ENCODE measurements at regions of chr11 and their contacts with region 1.

Region 1: DNA sequence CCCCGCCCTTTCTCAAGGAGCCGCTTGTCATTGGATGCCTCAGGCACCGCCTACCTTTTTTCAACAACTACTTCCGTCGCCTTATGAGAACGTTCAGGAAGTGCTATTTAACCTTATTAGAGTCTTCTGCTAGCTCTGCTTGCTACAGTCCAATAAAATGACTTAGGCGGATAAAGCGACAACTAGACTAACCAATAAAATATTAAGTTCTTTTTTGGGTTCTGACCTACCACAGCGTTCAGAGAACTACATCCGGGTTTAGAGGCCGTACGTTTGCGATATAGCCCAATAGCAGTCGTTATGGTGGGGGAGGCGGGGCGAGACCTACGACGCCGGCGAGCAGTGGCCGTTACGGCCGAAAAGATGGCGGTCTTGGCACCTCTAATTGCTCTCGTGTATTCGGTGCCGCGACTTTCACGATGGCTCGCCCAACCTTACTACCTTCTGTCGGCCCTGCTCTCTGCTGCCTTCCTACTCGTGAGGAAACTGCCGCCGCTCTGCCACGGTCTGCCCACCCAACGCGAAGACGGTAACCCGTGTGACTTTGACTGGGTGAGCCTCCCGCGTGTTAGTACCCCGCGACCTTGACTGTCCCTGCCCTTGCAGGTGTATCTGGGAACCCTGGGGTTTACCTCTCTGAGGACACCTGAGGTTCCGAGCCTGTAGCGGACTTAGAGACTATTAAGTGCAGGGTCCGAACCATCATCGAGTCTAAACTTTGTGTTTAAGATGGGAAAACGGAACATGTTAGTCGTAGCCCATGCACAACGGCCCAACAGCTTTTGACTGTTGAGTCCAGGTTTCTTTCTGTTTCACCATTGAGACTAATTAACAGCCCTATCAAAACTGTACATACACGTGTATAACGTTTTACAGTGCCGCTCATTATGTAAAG is at the start of gene TMX2:
- DNase-seq: peak; percentile 96
- ATAC-seq: peak; percentile 86
- H3K4me3 ChIP-seq: peak within 1 kb of the TSS; percentile 78 to 100 (median 93)
- H3K4me3 Mint-ChIP-seq: peak within 1 kb of the TSS; percentile 99
- H3K27ac ChIP-seq: peak within 1 kb of the TSS; percentile 70 to 96
- H3K27ac Mint-ChIP-seq: peak within 1 kb of the TSS; percentile 94
- H3K4me1 ChIP-seq: peaks cover 21 to 28% of the 10 kb centered on the region in 2 donors
- H3K4me1 Mint-ChIP-seq: peaks cover 42% of the 10 kb centered on the region
- H3K27me3 ChIP-seq: no peaks in the 10 kb centered on the region
- H3K27me3 Mint-ChIP-seq: no peaks in the 10 kb centered on the region
- CTCF ChIP-seq: no peak
- total RNA-seq, gene TMX2: 58.8 and 60.2 TPM in 2 replicates

Region 2: GRCh38 chr11:57657194-57658022 is 55.1 kb before region 1 on chr11 and contains the start of gene CLP1:
- CTCF ChIA-PET with region 1: no interaction called
- POLR2A ChIA-PET with region 1: no interaction called
- intact Hi-C with region 1: loop called (anchors 1 kb)
- DNase-seq: peak; percentile 98
- ATAC-seq: peak; percentile 97
- H3K4me3 ChIP-seq: peak within 1 kb of the TSS; percentile 68 to 95 (median 92)
- H3K4me3 Mint-ChIP-seq: peak within 1 kb of the TSS; percentile 94
- H3K27ac ChIP-seq: peak within 1 kb of the TSS; percentile 77 to 92
- H3K27ac Mint-ChIP-seq: peak within 1 kb of the TSS; percentile 94
- H3K4me1 ChIP-seq: peaks cover 8 to 14% of the 10 kb centered on the region in 2 donors
- H3K4me1 Mint-ChIP-seq: peaks cover 28% of the 10 kb centered on the region
- H3K27me3 ChIP-seq: no peaks in the 10 kb centered on the region
- H3K27me3 Mint-ChIP-seq: no peaks in the 10 kb centered on the region
- CTCF ChIP-seq: no peak
- total RNA-seq, gene CLP1: 15.5 and 15.8 TPM in 2 replicates

Region 3: DNA sequence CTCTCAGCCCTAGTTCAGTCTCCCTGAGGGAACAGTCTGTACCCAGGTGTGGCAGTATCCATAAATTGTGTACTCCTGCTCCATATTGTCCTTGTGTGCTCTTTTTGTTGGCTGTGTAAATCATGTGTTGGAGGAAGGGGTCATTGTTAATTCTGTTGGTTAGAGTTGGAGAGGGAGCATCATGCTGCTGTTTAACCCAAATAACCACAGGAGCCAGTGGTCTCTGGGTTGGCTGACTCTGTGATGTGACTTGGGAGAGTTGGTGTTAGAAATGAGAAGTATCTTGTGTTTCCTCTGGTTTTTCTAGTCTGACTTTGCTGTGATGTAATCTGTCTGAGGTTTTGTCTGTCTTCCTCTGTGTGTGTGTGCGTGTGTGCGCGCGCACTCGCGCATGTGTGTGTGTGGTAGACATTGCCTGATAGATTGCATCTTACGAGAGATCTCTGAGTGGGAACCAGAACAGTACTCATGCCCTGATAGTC is 79.6 kb after region 1 on chr11:
- CTCF ChIA-PET with region 1: interaction called, 3 read pairs
- POLR2A ChIA-PET with region 1: interaction called, 3 read pairs
- intact Hi-C with region 1: loop called (anchors 1 kb)
- DNase-seq: peak; percentile 94
- ATAC-seq: peak; percentile 89
- H3K4me3 ChIP-seq: peak overlapping the region; percentile 15 to 62 (median 36)
- H3K4me3 Mint-ChIP-seq: peak overlapping the region; percentile 80
- H3K27ac ChIP-seq: peak overlapping the region; percentile 87 to 97
- H3K27ac Mint-ChIP-seq: peak overlapping the region; percentile 93
- H3K4me1 ChIP-seq: peaks cover 53 to 57% of the 10 kb centered on the region in 2 donors
- H3K4me1 Mint-ChIP-seq: peaks cover 56% of the 10 kb centered on the region
- H3K27me3 ChIP-seq: no peaks in the 10 kb centered on the region
- H3K27me3 Mint-ChIP-seq: no peaks in the 10 kb centered on the region
- CTCF ChIP-seq: no peak

Measured in B cell (primary cell).